ENCODE measurements at regions of chr10 and their contacts with region 1.

Region 1: GRCh38 chr10:77290528-77291155 is 347.0 kb downstream of the KCNMA1 start:
- DNase-seq: no peak
- H3K4me3 ChIP-seq: no peak overlapping the region
- H3K27ac ChIP-seq: no peak overlapping the region
- H3K4me1 ChIP-seq: peaks cover 8% of the 10 kb centered on the region
- H3K27me3 ChIP-seq: no peaks in the 10 kb centered on the region
- CTCF ChIP-seq: no peak
- POLR2A ChIP-seq: no peak

Region 2: DNA sequence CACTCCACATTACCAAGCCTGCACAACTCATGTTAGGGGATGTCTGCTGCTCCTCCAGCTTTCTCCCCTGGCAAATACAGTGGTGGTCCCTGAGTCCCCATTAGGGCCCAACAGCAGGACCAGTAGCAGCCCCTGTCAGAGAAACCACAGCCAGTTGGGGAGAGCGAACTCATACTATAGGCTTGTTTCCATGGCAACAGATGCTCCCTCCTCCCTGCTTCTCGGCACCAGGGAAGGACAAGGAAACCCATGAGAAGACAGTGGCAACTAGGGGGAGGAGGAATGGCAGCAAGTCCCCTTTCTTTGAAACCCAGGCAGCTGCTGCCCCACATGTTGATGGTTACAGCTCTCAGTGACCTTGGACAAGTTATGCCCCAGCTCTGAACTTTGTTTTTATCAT is 20.5 kb after region 1 on chr10:
- intact Hi-C with region 1: no loop called
- DNase-seq: no peak
- H3K4me3 ChIP-seq: no peak overlapping the region
- H3K27ac ChIP-seq: no peak overlapping the region
- H3K4me1 ChIP-seq: peaks cover 2% of the 10 kb centered on the region
- H3K27me3 ChIP-seq: no peaks in the 10 kb centered on the region
- CTCF ChIP-seq: no peak
- POLR2A ChIP-seq: no peak

Region 3: DNA sequence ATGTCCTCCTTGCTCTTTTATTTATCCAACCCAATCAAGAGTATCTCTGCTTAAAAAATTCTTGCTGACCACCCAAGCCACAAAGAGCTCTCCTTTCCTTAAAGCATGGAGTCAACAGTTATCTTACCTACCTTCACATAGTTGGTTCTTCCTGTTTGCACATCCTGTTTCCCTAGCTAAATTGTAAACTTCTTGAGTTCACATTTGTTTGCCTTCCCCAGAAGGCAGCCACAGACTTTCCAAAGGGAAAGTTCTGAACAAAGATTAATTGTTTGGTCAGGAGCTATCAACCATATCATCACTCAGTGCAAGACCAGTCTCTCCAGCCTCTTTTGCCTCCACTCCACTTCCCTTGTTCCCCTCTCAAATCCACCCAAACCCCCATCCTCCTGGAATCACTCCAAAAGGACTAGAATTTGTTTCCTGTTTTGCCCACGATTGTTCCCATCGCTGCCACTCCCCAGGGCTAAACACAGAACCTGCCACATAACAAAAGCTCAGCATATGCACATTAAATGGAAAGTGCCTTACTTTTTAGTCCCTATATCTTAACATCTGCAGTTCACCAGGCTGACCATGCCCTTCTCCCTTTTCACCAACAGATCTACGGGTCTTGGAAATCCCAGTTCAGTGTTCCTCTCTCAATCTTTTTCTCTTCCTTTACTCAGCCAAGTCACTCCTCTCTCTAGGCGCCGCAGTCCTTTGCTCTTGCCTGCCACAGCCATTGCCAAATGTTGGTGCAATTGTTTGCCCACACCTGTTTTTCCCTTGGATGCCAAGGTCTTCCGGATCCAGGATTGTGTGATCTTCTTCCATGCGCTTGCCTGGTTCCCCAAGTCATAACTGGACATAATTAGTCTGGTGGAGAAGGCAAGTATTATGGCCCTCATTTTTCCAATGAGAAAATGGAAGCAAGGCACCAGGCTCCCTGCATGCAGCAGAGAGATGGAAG is 81.5 kb after region 1 on chr10:
- intact Hi-C with region 1: loop called (anchors 5 kb)
- DNase-seq: peak; percentile 51
- H3K4me3 ChIP-seq: no peak overlapping the region
- H3K27ac ChIP-seq: peak overlapping the region; percentile 10 to 68
- H3K4me1 ChIP-seq: no peaks in the 10 kb centered on the region
- H3K27me3 ChIP-seq: no peaks in the 10 kb centered on the region
- CTCF ChIP-seq: no peak
- POLR2A ChIP-seq: no peak